ENCODE measurements at regions of chr5 and their contacts with region 1.

Region 1: GRCh38 chr5:132419502-132420468 is 50.3 kb downstream of the SLC22A5 start:
- DNase-seq: peak; percentile 62
- ATAC-seq: peak; percentile 35
- H3K4me3 Mint-ChIP-seq: peak overlapping the region; percentile 82
- H3K27ac Mint-ChIP-seq: peak overlapping the region; percentile 90
- H3K4me1 Mint-ChIP-seq: peaks cover 97% of the 10 kb centered on the region
- H3K27me3 Mint-ChIP-seq: no peaks in the 10 kb centered on the region
- CTCF ChIP-seq: peak; percentile 51

Region 2: GRCh38 chr5:132007399-132008165 is 412.2 kb before region 1 on chr5:
- CTCF ChIA-PET with region 1: no interaction called
- POLR2A ChIA-PET with region 1: no interaction called
- intact Hi-C with region 1: no loop called
- DNase-seq: peak; percentile 46
- ATAC-seq: peak; percentile 64
- H3K4me3 Mint-ChIP-seq: no peak overlapping the region
- H3K27ac Mint-ChIP-seq: no peak overlapping the region
- H3K4me1 Mint-ChIP-seq: peaks cover 10% of the 10 kb centered on the region
- H3K27me3 Mint-ChIP-seq: peaks cover 35% of the 10 kb centered on the region
- CTCF ChIP-seq: peak; percentile 73

Region 3: GRCh38 chr5:132260714-132261551 is 158.9 kb before region 1 on chr5:
- CTCF ChIA-PET with region 1: no interaction called
- POLR2A ChIA-PET with region 1: no interaction called
- intact Hi-C with region 1: no loop called
- DNase-seq: no peak
- ATAC-seq: no peak
- H3K4me3 Mint-ChIP-seq: no peak overlapping the region
- H3K27ac Mint-ChIP-seq: no peak overlapping the region
- H3K4me1 Mint-ChIP-seq: no peaks in the 10 kb centered on the region
- H3K27me3 Mint-ChIP-seq: peaks cover 13% of the 10 kb centered on the region
- CTCF ChIP-seq: no peak

Region 4: DNA sequence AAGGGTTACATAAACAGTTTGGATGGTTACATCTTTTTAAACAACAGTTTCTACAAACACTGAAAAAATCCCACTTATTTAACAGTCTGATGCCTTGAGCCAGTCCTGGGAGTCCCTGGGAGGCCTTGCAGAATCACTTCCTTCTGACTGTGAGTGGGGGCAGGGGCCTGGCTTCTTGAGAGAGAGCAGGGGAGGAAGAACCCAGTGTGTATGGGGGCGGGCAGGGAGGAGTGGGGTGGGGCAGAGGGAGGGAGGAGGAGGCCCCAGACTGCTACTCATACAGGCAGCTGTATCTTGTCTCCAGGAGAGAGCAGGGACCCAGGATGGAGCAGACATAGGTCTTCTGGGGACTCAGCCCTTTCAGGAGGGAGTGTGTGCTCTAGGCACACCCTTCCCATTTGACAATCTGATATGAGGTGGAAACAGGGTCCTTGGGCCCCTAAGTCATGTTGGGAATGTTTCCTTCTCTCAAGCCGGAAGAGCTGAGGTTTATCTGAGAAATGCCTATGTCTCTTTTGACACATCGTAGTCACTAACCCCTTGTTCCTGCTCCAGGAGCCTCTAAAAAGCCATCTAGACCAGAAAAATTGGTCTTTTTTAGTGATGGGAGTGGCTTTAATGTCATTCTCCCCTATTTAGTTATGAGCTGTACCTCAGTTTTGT is 17.9 kb after region 1 on chr5:
- CTCF ChIA-PET with region 1: interaction called, 3 read pairs
- POLR2A ChIA-PET with region 1: interaction called, 39 read pairs
- intact Hi-C with region 1: loop called (anchors 2 kb)
- DNase-seq: no peak
- ATAC-seq: peak; percentile 96
- H3K4me3 Mint-ChIP-seq: peak overlapping the region; percentile 48
- H3K27ac Mint-ChIP-seq: peak overlapping the region; percentile 74
- H3K4me1 Mint-ChIP-seq: peaks cover 60% of the 10 kb centered on the region
- H3K27me3 Mint-ChIP-seq: no peaks in the 10 kb centered on the region
- CTCF ChIP-seq: no peak

Region 5: GRCh38 chr5:132456296-132457001 is 36.7 kb after region 1 on chr5:
- CTCF ChIA-PET with region 1: interaction called, 6 read pairs
- POLR2A ChIA-PET with region 1: interaction called, 150 read pairs
- intact Hi-C with region 1: no loop called
- DNase-seq: peak; percentile 56
- ATAC-seq: peak; percentile 78
- H3K4me3 Mint-ChIP-seq: peak overlapping the region; percentile 75
- H3K27ac Mint-ChIP-seq: peak overlapping the region; percentile 99
- H3K4me1 Mint-ChIP-seq: peaks cover 92% of the 10 kb centered on the region
- H3K27me3 Mint-ChIP-seq: no peaks in the 10 kb centered on the region
- CTCF ChIP-seq: no peak

Region 6: GRCh38 chr5:132466433-132467286 is 46.9 kb after region 1 on chr5:
- CTCF ChIA-PET with region 1: interaction called, 17 read pairs
- POLR2A ChIA-PET with region 1: interaction called, 71 read pairs
- intact Hi-C with region 1: loop called (anchors 2 kb)
- DNase-seq: peak; percentile 44
- ATAC-seq: peak; percentile 64
- H3K4me3 Mint-ChIP-seq: peak overlapping the region; percentile 55
- H3K27ac Mint-ChIP-seq: peak overlapping the region; percentile 54
- H3K4me1 Mint-ChIP-seq: peaks cover 92% of the 10 kb centered on the region
- H3K27me3 Mint-ChIP-seq: no peaks in the 10 kb centered on the region
- CTCF ChIP-seq: no peak

Region 7: DNA sequence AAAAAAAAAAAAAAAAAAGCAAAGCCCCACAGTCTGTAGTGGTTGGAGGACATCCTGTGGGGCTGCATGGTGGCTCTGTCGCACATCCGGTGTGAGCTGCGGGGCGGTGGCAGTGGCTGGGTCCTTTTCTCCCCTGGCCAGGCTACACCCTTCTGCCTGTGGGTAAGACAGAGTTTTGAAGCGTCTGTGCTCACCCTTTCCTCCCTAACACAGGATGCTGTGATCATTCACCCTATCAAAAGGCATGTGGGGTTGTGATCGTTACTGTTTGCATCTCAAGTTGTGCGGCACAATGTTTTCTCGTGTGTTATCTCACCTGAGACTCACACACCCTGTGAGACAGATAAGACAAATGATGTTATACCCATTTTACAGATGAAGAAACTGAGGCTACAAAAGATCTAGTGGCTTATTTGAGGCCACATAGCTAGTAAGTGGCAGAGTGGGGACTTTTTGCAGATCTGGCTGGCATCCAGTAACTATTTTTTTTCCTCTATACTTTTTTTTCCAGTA is 53.3 kb after region 1 on chr5:
- CTCF ChIA-PET with region 1: interaction called, 7 read pairs
- POLR2A ChIA-PET with region 1: interaction called, 159 read pairs
- intact Hi-C with region 1: loop called (anchors 1 kb)
- DNase-seq: peak; percentile 50
- ATAC-seq: peak; percentile 87
- H3K4me3 Mint-ChIP-seq: peak overlapping the region; percentile 50
- H3K27ac Mint-ChIP-seq: peak overlapping the region; percentile 91
- H3K4me1 Mint-ChIP-seq: peaks cover 78% of the 10 kb centered on the region
- H3K27me3 Mint-ChIP-seq: no peaks in the 10 kb centered on the region
- CTCF ChIP-seq: no peak

Region 8: GRCh38 chr5:132479111-132479951 is 59.5 kb after region 1 on chr5:
- CTCF ChIA-PET with region 1: interaction called, 7 read pairs
- POLR2A ChIA-PET with region 1: interaction called, 159 read pairs
- intact Hi-C with region 1: no loop called
- DNase-seq: no peak
- ATAC-seq: no peak
- H3K4me3 Mint-ChIP-seq: no peak overlapping the region
- H3K27ac Mint-ChIP-seq: peak overlapping the region; percentile 83
- H3K4me1 Mint-ChIP-seq: peaks cover 73% of the 10 kb centered on the region
- H3K27me3 Mint-ChIP-seq: no peaks in the 10 kb centered on the region
- CTCF ChIP-seq: no peak

Region 9: DNA sequence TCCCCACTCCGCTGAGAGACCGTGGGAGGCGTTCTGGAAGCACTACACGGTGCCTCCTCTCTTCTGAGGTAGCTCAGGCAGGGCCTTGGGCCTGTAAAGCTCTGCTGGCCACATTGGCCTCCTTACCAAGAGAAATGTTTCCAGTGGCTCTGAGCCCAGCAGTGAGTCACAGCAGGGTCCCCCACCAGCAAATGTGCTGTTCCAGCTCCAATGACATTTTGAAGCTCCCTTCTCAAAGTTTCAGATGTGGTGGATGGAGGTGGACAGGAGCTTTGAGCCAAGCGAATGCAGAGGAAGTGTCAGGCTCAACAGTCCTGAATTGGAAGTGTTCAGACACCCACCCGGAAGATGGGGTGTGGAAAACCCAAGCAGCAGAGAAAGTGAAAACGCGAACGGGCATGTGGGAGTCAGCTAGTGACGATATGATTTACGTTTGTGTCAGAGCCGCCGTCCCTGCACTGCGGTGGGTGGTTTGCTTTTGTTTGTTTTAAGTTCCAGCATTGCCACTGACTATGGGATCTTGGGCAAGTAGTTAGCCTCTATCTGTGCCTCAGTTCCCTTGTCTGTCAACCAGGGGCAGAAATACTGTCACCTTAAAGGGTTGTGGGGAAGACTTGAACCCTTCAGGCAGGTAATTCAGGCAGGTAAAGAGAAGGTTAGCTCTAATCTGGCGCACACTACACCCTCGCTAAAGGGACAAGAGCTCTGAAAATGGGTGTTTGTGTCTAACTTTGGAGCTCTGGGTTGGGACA is 1510.5 kb after region 1 on chr5:
- CTCF ChIA-PET with region 1: no interaction called
- POLR2A ChIA-PET with region 1: no interaction called
- intact Hi-C with region 1: loop called (anchors 10 kb)
- DNase-seq: peak; percentile 35
- ATAC-seq: peak; percentile 6
- H3K4me3 Mint-ChIP-seq: peak overlapping the region; percentile 72
- H3K27ac Mint-ChIP-seq: peak overlapping the region; percentile 96
- H3K4me1 Mint-ChIP-seq: peaks cover 86% of the 10 kb centered on the region
- H3K27me3 Mint-ChIP-seq: no peaks in the 10 kb centered on the region
- CTCF ChIP-seq: no peak